HepG2 (cell line): ENCODE measurements at regions of chr16 and their contacts with region 1.

Region 1: DNA sequence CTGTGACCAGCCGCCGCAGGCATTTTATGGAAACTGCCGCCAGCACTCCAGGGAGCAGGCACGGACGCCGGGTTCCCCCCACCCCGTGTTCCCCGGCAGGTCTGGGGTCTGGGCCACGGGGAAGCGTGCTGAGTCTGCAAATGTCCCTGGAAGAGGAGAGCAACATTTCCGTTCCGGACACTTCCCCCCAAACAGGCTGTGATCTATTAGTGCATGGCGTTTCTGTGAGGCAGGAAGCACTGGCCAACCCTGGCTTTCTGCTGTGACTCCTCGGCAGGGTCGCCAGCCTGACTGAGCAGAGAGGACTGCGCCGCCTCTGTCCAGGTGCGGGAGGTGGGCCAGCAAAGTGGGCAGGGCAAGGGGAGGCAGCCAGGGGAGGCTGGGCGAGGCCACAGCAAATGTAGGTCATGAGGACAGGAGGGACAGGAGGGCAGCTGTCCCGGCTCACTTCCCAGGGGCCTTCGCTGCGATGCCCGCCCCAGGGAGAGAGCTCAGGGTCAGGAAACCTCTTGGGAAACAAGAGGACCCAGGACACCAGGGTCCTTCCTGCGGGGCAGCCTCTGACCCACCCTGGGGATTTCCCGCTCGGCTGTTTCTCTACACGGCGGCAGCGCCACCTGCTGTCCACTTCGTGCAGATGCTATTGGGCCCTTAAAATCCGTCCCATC is 9.5 kb downstream of the FOXF1 start:
- DNase-seq: peak; percentile 48
- ATAC-seq: peak; percentile 56
- H3K4me3 ChIP-seq: no peak overlapping the region
- H3K27ac ChIP-seq: no peak overlapping the region
- H3K4me1 ChIP-seq: peaks cover 9% of the 10 kb centered on the region
- H3K27me3 ChIP-seq: peaks cover 12 to 88% of the 10 kb centered on the region in 2 experiments
- CTCF ChIP-seq: peak; percentile 92
- EP300 ChIP-seq: no peak
- POLR2A ChIP-seq: no peak
- RAD21 ChIP-seq: peak; percentile 74

Region 2: DNA sequence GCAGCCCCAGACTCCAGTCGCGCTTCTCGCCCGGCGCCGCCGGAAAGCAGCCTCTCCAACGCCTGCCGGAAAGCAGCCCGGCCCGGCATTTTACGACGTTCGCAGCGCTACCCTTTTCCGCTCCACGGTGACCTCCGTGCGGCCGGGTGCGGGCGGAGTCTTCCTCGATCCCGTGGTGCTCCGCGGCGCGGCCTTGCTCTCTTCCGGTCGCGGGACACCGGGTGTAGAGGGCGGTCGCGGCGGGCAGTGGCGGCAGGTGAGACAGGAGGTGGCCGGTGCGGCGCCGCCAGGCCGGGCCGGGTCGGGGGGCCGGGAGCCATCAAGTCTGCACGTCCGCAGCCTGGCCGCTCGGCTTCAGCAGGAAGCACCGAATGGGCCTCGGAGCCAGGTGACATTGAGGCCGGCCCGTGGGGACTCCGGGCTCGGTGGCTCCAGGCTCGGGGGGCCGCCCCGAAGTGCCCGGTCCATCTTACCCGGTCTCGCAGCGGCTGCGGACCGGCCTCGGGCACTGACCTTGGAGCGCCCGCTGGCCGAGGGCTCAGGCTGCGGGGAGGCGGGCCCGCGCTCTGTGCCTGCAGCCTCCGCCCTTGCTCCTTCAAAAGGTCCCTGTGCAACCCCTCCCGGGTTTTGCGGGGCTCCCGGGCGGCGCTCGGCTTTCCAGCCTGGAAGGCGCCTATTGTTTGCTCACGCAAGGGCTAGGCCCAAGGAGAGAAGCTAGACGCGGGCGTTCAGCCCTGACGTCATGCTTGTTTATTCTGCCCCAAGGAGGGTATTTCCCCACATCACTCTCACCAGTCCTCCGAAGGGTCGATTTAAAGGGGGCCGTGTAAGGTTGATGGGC is 720.1 kb before region 1 on chr16 and contains the starts of genes COX4I1 and EMC8:
- CTCF ChIA-PET with region 1: no interaction called
- POLR2A ChIA-PET with region 1: no interaction called
- in situ Hi-C with region 1: loop called (anchors 25 kb)
- intact Hi-C with region 1: no loop called
- DNase-seq: peak; percentile 90
- ATAC-seq: peak; percentile 88
- H3K4me3 ChIP-seq: peak within 1 kb of the TSS; percentile 85 to 100 (median 89)
- H3K27ac ChIP-seq: peak within 1 kb of the TSS; percentile 92
- H3K4me1 ChIP-seq: peaks cover 45% of the 10 kb centered on the region
- H3K27me3 ChIP-seq: no peaks in the 10 kb centered on the region; a peak in 1 of 5 replicates
- CTCF ChIP-seq: peak; percentile 30
- EP300 ChIP-seq: peak in 1 of 2 experiments; percentile 43; a peak in 2 of 4 replicates
- POLR2A ChIP-seq: peak; percentile 65 to 88; a peak in 3 of 4 replicates
- RAD21 ChIP-seq: no peak
- total RNA-seq, gene COX4I1: 631 and 658 TPM in 2 replicates
- total RNA-seq, gene EMC8: 47.6 and 55.0 TPM in 2 replicates

Region 3: GRCh38 chr16:86044241-86044671 is 475.5 kb before region 1 on chr16:
- CTCF ChIA-PET with region 1: interaction called, 4 read pairs
- POLR2A ChIA-PET with region 1: no interaction called
- in situ Hi-C with region 1: loop called (anchors 10 kb)
- intact Hi-C with region 1: no loop called
- DNase-seq: peak; percentile 23
- ATAC-seq: peak; percentile 88
- H3K4me3 ChIP-seq: no peak overlapping the region
- H3K27ac ChIP-seq: no peak overlapping the region
- H3K4me1 ChIP-seq: no peaks in the 10 kb centered on the region
- H3K27me3 ChIP-seq: peaks cover 3 to 7% of the 10 kb centered on the region in 2 experiments; a peak in 4 of 5 replicates
- CTCF ChIP-seq: peak; percentile 85
- EP300 ChIP-seq: no peak
- POLR2A ChIP-seq: no peak
- RAD21 ChIP-seq: peak; percentile 55

Region 4: DNA sequence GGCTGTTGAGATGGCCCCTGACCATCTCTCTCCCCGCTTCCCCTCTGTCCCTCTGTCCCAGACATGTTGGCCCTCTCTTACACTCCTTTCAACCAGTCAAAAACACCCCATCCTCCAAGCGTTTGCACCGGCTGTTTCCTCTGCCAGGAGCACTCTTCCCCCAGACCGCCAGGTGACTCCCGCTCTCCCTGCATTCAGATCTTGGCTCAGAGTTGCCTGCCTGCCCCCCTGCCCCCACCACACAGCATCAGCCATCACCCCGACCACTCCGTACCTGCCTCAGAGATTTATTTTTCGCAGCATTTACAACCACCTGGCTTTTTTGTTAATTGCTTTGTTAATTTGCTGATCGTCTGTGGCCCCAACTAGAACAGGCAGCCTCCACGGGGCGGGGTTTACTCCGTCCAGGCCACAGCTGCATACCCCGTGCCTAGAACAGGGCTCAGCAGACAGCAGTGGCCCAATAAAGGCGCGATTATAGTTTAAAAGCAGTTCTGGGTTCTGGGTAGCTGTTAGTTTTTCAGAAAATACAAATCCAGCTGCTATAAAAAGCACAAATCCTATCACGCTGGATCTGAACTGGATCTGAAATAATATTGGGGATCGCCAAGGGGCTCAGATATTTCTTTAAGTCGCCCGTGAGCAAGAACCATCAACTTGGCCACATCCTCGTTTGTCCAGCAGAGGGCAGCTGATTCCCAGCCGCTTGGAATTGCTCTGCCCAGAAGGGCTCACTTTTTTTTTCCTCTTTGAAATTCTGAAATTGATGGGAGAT is 447.3 kb before region 1 on chr16:
- CTCF ChIA-PET with region 1: interaction called, 22 read pairs
- POLR2A ChIA-PET with region 1: no interaction called
- in situ Hi-C with region 1: loop called (anchors 5 kb)
- intact Hi-C with region 1: no loop called
- DNase-seq: peak; percentile 41
- ATAC-seq: peak; percentile 56
- H3K4me3 ChIP-seq: no peak overlapping the region
- H3K27ac ChIP-seq: no peak overlapping the region
- H3K4me1 ChIP-seq: peaks cover 8% of the 10 kb centered on the region; the same call in 1 of the 2 replicates
- H3K27me3 ChIP-seq: peaks cover 0 to 26% of the 10 kb centered on the region in 2 experiments; a peak in 3 of 5 replicates
- CTCF ChIP-seq: peak; percentile 78
- EP300 ChIP-seq: no peak
- POLR2A ChIP-seq: no peak
- RAD21 ChIP-seq: peak; percentile 66

Region 5: GRCh38 chr16:86343027-86343787 is 176.6 kb before region 1 on chr16:
- CTCF ChIA-PET with region 1: interaction called, 23 read pairs
- POLR2A ChIA-PET with region 1: no interaction called
- in situ Hi-C with region 1: loop called (anchors 5 kb)
- intact Hi-C with region 1: loop called (anchors 1 kb)
- DNase-seq: no peak
- ATAC-seq: no peak
- H3K4me3 ChIP-seq: no peak overlapping the region
- H3K27ac ChIP-seq: no peak overlapping the region
- H3K4me1 ChIP-seq: no peaks in the 10 kb centered on the region
- H3K27me3 ChIP-seq: peaks cover 0 to 62% of the 10 kb centered on the region in 2 experiments; a peak in 4 of 5 replicates
- CTCF ChIP-seq: no peak
- EP300 ChIP-seq: no peak
- POLR2A ChIP-seq: no peak
- RAD21 ChIP-seq: no peak

Region 6: DNA sequence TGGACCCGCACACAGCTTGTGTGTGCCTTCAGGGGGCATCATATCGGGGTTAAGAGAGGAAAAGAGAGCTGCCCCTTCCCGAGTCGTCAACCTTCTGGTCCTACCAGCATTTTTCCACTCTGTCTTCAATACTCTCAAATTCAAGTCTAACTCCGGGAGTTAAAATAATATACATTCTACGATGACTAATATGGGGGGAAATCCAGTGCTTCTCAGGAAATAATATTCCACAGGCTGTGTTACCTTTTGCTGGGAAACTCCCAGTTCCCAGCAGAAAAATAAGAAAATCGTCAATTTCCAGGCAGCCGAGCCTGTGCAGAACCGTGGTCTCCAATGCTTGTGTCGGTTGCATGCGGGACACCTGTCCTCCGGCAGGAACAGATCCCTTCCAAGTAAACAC is 114.5 kb before region 1 on chr16:
- CTCF ChIA-PET with region 1: no interaction called
- POLR2A ChIA-PET with region 1: no interaction called
- in situ Hi-C with region 1: no loop called
- intact Hi-C with region 1: no loop called
- DNase-seq: no peak
- ATAC-seq: no peak
- H3K4me3 ChIP-seq: no peak overlapping the region
- H3K27ac ChIP-seq: no peak overlapping the region
- H3K4me1 ChIP-seq: no peaks in the 10 kb centered on the region
- H3K27me3 ChIP-seq: peaks cover 3 to 53% of the 10 kb centered on the region in 2 experiments
- CTCF ChIP-seq: no peak
- EP300 ChIP-seq: no peak
- POLR2A ChIP-seq: no peak
- RAD21 ChIP-seq: no peak

Region 7: GRCh38 chr16:86628614-86629013 is 108.8 kb after region 1 on chr16:
- CTCF ChIA-PET with region 1: no interaction called
- POLR2A ChIA-PET with region 1: no interaction called
- in situ Hi-C with region 1: no loop called
- intact Hi-C with region 1: no loop called
- DNase-seq: no peak
- ATAC-seq: no peak
- H3K4me3 ChIP-seq: no peak overlapping the region
- H3K27ac ChIP-seq: no peak overlapping the region
- H3K4me1 ChIP-seq: no peaks in the 10 kb centered on the region
- H3K27me3 ChIP-seq: peaks cover 3 to 57% of the 10 kb centered on the region in 2 experiments; a peak in 4 of 5 replicates
- CTCF ChIP-seq: no peak
- EP300 ChIP-seq: no peak
- POLR2A ChIP-seq: no peak
- RAD21 ChIP-seq: no peak